A549 (cell line): ENCODE measurements at regions of chr1 and their contacts with region 1.

Region 1: DNA sequence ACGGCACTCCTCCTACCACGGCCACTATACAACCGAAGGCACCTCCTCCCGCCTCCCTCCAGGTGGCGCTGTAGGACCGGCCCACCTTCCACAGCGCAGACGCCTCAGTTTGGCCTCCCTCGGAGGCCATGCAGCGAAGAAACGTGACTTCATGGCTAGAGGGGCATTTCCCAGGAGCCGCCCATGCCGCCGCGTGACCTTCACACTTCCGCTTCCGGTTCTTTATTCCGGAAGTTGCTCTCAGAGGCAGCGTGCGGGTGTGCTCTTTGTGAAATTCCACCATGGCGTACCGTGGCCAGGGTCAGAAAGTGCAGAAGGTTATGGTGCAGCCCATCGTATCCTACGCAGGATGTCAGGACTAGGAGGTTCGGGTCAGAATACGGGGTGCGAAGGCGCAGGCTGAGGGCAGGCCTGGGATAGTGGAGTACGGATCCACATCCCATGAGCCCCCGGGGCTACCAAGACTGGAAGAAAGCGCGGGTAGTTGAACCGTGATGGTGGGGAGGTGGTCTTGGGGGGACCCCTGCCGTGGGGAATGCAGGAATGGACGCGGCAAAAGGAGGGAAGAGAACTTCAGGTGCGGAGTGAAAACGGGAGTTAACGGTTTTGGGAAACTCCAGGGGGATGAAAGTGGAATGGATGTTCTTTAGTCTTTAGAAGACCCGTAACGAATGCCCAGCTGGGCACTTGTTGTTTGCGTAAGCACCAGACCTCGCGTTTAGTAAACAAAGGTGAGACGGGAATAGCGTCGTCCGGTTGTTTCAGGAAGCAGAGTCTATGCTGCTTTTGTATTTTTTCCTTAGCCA is at the start of gene SNRPE:
- DNase-seq: peak; percentile 95 to 99
- ATAC-seq: peak; percentile 94 to 97
- H3K4me3 ChIP-seq: peak within 1 kb of the TSS; percentile 92
- H3K27ac ChIP-seq: peak within 1 kb of the TSS; percentile 92 to 93
- H3K4me1 ChIP-seq: peaks cover 20% of the 10 kb centered on the region; the same call in 2 of the 3 replicates
- CTCF ChIP-seq: peak; percentile 90
- EP300 ChIP-seq: no peak
- POLR2A ChIP-seq: peak; percentile 76
- RAD21 ChIP-seq: peak; percentile 94 to 97
- polyA plus RNA-seq, gene SNRPE: 371 and 386 TPM in 2 replicates

Region 2: GRCh38 chr1:203926025-203926540 is 64.5 kb after region 1 on chr1:
- CTCF ChIA-PET with region 1: no interaction called
- POLR2A ChIA-PET with region 1: no interaction called
- DNase-seq: peak in 1 of 2 experiments; percentile 27
- ATAC-seq: peak; percentile 72 to 88
- H3K4me3 ChIP-seq: no peak overlapping the region
- H3K27ac ChIP-seq: peak overlapping the region; percentile 44 to 75; a peak in 5 of 6 replicates
- H3K4me1 ChIP-seq: peaks cover 12% of the 10 kb centered on the region; the same call in 2 of the 3 replicates
- CTCF ChIP-seq: no peak
- EP300 ChIP-seq: no peak
- POLR2A ChIP-seq: no peak
- RAD21 ChIP-seq: no peak

Region 3: DNA sequence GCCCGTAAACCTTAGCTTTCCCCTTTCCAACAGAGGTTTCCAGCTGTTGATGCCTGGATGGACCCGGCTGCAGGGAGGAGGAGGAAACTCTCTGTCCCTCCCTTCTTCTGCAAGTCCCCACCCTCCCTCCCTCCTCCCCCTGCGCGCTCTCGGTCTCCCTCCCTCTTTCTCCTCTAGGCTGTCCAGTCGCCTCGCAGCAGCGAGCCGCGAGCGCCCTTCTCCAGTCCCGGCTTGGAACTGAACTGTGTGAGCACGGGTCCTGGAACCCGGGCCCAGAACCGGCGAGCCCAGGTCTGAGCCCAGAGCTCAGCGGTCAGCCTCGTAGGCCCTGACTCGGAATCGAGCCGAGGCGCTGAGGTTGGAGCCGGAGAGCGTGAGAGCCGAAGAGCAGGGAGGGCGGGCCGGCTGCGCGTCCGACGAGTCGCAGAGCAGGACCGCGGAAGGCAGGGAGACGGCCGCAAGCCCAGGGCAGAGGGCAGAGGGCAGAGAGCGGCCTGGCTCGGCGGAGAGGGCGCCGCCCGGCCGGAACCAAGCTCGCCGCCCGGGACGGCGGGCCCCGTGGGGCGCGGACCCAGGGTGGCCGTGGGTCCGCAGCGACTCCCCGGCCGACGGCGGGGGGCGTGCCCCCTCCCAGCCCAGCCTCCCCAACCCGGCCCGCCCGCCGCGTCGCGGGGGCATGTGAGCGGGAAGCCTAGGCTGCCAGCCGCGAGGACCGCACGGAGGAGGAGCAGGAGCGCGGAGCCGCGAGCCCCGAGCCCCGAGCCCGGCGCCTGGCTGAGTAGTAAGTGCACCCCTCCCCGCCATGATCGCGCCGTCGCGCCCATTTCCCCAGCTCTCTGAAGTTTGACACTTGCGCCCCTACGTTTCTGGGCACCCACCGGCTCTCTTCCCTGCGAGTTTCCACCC is 211.6 kb after region 1 on chr1 and contains the start of gene SOX13:
- CTCF ChIA-PET with region 1: interaction called, 10 read pairs
- POLR2A ChIA-PET with region 1: interaction called, 14 read pairs
- DNase-seq: peak; percentile 91 to 95
- ATAC-seq: peak; percentile 85 to 91
- H3K4me3 ChIP-seq: peak within 1 kb of the TSS; percentile 86
- H3K27ac ChIP-seq: peak within 1 kb of the TSS; percentile 82 to 90
- H3K4me1 ChIP-seq: peaks cover 8% of the 10 kb centered on the region
- CTCF ChIP-seq: peak; percentile 22; the same call in 2 of the 3 replicates
- EP300 ChIP-seq: no peak
- POLR2A ChIP-seq: peak; percentile 97
- RAD21 ChIP-seq: peak; percentile 53 to 67
- polyA plus RNA-seq, gene SOX13: 9.8 TPM in 2 replicates